ENCODE measurements at regions of chr2 and their contacts with region 1.

Region 1: GRCh38 chr2:30252723-30253701 is 21.7 kb downstream of the LBH start:
- DNase-seq: peak; percentile 85
- ATAC-seq: peak; percentile 40
- H3K4me3 ChIP-seq: no peak overlapping the region
- H3K27ac ChIP-seq: peak overlapping the region; percentile 90
- H3K4me1 ChIP-seq: peaks cover 49% of the 10 kb centered on the region
- H3K27me3 ChIP-seq: no peaks in the 10 kb centered on the region
- CTCF ChIP-seq: no peak
- POLR2A ChIP-seq: no peak
- RAD21 ChIP-seq: peak; percentile 7; the same call in 1 of the 2 replicates

Region 2: DNA sequence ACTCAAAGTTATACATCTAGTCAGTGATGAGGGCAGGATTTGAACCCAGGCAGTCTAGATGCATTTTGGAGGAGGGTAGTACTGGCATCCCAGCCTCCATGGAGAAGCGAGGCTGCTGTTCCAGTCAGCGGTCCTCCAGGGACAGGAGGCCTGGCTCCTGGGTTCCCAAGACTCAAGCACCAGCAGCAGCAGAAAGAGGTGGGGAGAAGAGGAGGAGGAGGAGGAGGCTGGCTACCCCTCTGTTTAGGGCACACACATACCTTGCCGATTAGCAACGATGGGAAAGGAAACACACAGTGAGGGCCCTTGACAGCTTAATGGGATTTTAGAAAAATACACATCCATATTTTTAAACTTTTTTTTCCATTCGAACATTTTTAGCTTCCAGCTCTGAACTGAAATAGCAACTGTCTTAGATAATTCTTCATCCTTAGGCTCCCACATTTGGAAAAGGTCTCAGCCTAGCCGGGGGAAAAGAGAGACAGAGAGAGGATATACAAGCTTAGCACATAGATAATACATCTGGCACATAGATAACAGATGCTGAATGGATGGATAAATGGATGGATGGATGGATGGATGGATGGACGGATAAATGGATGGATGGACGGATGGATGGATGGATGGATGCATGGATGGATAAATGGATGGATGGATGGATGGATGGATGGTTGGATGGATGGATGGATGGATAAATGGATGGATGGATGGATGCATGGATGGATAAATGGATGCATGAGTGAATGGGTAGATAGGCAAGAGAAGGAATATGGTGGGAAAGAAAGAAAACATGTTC is 66.2 kb after region 1 on chr2:
- CTCF ChIA-PET with region 1: no interaction called
- POLR2A ChIA-PET with region 1: interaction called, 16 read pairs
- dilution Hi-C with region 1: no loop called
- in situ Hi-C with region 1: no loop called
- intact Hi-C with region 1: no loop called
- DNase-seq: no peak
- ATAC-seq: no peak
- H3K4me3 ChIP-seq: no peak overlapping the region
- H3K27ac ChIP-seq: no peak overlapping the region
- H3K4me1 ChIP-seq: no peaks in the 10 kb centered on the region
- H3K27me3 ChIP-seq: no peaks in the 10 kb centered on the region; the same call in 1 of the 2 replicates
- CTCF ChIP-seq: no peak
- POLR2A ChIP-seq: no peak
- RAD21 ChIP-seq: no peak

Region 3: GRCh38 chr2:30584116-30584515 is 331.1 kb after region 1 on chr2:
- CTCF ChIA-PET with region 1: no interaction called
- POLR2A ChIA-PET with region 1: interaction called, 18 read pairs
- dilution Hi-C with region 1: no loop called
- in situ Hi-C with region 1: no loop called
- intact Hi-C with region 1: no loop called
- DNase-seq: no peak
- ATAC-seq: no peak
- H3K4me3 ChIP-seq: no peak overlapping the region
- H3K27ac ChIP-seq: no peak overlapping the region
- H3K4me1 ChIP-seq: peaks cover 4% of the 10 kb centered on the region; the same call in 1 of the 2 replicates
- H3K27me3 ChIP-seq: no peaks in the 10 kb centered on the region
- CTCF ChIP-seq: no peak
- POLR2A ChIP-seq: no peak
- RAD21 ChIP-seq: no peak

Measured in IMR-90 (cell line).